ENCODE measurements at regions of chr4 and their contacts with region 1.

Region 1: DNA sequence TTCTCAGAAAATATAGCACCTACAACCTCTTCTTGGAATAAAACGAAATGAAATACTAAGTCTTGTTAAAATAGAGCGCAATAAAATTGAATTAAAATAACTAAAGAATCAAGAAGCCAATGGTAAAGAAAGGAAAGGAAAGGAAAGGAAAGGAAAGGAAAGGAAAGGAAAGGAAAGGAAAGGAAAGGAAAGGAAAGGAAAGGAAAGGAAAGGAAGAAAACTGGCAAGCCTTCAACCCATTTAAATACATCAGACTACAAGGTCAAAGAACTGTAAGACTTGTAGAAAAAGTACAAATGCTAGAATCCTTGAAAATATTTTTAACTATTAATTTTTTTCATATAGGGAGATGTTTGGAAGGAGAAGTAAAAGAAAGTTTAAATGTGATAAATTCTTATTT is 372.1 kb downstream of the IQCM start:
- DNase-seq: no peak
- H3K4me3 ChIP-seq: no peak overlapping the region
- H3K27ac ChIP-seq: no peak overlapping the region
- H3K4me1 ChIP-seq: peaks cover 21% of the 10 kb centered on the region
- H3K27me3 ChIP-seq: no peaks in the 10 kb centered on the region
- CTCF ChIP-seq: no peak

Region 2: DNA sequence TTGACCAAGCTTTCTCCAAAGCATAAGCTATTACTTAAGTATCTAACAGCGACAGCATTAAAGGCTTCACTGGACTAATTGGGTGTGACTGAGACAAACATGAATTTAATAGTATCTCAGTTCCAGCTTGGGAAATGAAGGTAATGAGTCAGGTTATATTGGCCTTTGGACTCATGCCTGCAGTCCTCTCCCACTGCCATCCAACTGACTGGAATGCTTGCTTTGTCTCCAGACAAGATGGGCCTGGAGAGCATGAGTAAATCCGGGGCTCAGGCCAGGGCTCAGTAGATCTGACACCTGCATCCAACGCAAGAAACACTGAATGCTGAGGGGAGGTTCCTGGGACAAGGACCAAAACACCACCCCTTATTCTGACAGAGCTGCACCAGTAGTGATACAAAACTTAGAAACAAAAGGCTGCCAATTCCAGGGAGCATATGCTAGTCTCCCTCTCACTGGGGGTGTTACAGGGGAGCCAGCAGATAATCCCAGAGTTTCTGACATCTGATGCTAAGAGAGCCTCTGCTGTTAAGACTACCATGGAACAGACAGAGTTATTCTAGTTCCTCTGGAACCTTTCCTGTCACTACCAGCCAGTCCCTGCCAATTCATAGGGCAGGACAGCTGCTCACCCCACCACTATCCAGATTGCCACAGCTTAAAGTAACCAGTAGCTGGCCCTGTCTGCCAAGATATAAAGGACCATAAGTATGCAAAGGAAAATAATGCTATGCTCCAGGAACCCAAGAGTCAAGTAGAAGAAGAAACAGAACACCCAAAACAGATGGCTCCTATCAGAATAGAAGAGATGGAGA is 78.3 kb after region 1 on chr4:
- CTCF ChIA-PET with region 1: no interaction called
- POLR2A ChIA-PET with region 1: interaction called, 18 read pairs
- intact Hi-C with region 1: no loop called
- DNase-seq: no peak
- H3K4me3 ChIP-seq: no peak overlapping the region
- H3K27ac ChIP-seq: no peak overlapping the region
- H3K4me1 ChIP-seq: no peaks in the 10 kb centered on the region
- H3K27me3 ChIP-seq: no peaks in the 10 kb centered on the region
- CTCF ChIP-seq: no peak

Region 3: GRCh38 chr4:150389896-150390530 is 946.5 kb after region 1 on chr4:
- CTCF ChIA-PET with region 1: no interaction called
- POLR2A ChIA-PET with region 1: no interaction called
- intact Hi-C with region 1: no loop called
- DNase-seq: no peak
- H3K4me3 ChIP-seq: no peak overlapping the region
- H3K27ac ChIP-seq: no peak overlapping the region
- H3K4me1 ChIP-seq: peaks cover 12% of the 10 kb centered on the region
- H3K27me3 ChIP-seq: no peaks in the 10 kb centered on the region
- CTCF ChIP-seq: no peak